ENCODE measurements at regions of chr1 and their contacts with region 1.

Region 1: DNA sequence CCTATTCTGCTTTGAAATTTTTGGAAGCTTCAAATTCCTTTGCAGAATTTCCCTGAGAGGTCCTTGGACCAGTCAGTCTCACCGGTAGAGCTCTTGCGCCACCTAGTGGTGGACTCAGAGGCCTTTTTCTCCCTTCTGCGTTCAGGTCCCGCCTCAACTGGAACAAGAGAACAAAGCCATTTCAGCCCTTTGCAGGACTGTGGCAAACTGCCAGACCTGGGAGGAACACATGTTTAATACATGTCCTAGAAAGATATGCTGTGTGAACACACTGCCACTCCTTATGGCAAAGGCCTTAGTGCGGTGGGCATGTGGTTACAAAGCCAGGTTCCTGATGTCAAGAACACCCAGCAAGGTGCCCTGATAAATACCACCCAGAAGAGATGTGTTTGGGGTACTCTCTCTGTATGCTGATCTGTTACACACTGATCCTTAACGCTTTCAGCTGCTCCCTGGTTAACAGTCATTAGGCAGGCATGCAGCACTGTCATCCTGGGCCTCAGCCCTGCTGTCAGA is 82.2 kb upstream of the SSX2IP start:
- DNase-seq: peak; percentile 92
- ATAC-seq: peak; percentile 31
- H3K4me3 ChIP-seq: no peak overlapping the region
- H3K27ac ChIP-seq: peak overlapping the region; percentile 99
- H3K4me1 ChIP-seq: peaks cover 49% of the 10 kb centered on the region
- H3K27me3 ChIP-seq: no peaks in the 10 kb centered on the region
- CTCF ChIP-seq: peak; percentile 93

Region 2: DNA sequence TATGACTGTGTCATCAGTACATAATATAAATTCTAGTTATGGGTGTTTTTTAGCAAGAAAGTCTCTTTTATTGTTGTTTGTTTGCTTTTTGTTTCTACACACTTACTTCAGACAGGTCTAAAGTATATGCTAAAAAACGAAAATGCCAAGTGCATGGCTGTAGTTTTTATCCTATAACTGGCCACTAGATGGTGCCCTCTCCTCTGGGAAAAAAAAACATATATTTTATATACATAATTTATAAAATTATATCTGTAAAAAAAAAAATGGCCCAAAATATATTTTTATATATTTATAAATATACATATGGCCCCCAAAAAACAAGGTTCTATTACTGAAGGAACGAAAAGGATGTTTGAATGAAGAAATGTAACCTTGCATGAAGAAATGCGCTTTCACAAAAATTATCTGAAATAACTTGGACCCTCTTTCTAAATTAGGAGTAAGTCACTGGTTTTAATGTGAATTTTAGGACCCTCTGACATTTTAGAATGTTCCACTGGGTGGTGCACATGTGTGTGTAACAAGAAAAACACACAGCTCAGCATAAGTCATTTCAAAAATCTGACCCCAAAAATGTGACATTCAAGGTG is 867.1 kb before region 1 on chr1:
- CTCF ChIA-PET with region 1: no interaction called
- POLR2A ChIA-PET with region 1: no interaction called
- intact Hi-C with region 1: loop called (anchors 10 kb)
- DNase-seq: peak; percentile 51
- ATAC-seq: no peak
- H3K4me3 ChIP-seq: no peak overlapping the region
- H3K27ac ChIP-seq: no peak overlapping the region
- H3K4me1 ChIP-seq: peaks cover 21% of the 10 kb centered on the region
- H3K27me3 ChIP-seq: no peaks in the 10 kb centered on the region
- CTCF ChIP-seq: peak; percentile 45

Region 3: GRCh38 chr1:84726593-84727499 is 45.6 kb before region 1 on chr1:
- CTCF ChIA-PET with region 1: no interaction called
- POLR2A ChIA-PET with region 1: no interaction called
- intact Hi-C with region 1: no loop called
- DNase-seq: peak; percentile 50
- ATAC-seq: peak; percentile 74
- H3K4me3 ChIP-seq: no peak overlapping the region
- H3K27ac ChIP-seq: no peak overlapping the region
- H3K4me1 ChIP-seq: peaks cover 15% of the 10 kb centered on the region
- H3K27me3 ChIP-seq: no peaks in the 10 kb centered on the region
- CTCF ChIP-seq: no peak

Region 4: DNA sequence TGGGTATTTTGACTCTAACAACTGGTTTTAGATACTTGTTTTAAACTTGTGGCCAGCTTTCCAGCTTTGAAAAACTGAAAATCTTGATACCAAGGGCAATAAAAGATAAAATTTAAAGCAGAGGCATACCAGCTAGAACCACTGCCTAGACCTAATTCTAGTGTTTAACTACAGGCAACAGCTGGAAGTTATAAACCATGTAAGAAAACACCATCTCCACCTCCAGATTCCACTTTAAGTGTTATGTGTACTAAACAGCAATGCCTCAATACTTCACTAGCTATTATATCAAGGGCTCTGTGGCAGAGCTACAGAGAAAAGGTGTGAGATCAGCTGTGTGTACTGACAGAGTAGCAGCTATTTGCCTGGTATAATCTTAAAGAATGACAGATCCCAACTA is 51.0 kb after region 1 on chr1:
- CTCF ChIA-PET with region 1: no interaction called
- POLR2A ChIA-PET with region 1: no interaction called
- intact Hi-C with region 1: no loop called
- DNase-seq: no peak
- ATAC-seq: no peak
- H3K4me3 ChIP-seq: no peak overlapping the region
- H3K27ac ChIP-seq: no peak overlapping the region
- H3K4me1 ChIP-seq: no peaks in the 10 kb centered on the region
- H3K27me3 ChIP-seq: no peaks in the 10 kb centered on the region
- CTCF ChIP-seq: no peak

Region 5: DNA sequence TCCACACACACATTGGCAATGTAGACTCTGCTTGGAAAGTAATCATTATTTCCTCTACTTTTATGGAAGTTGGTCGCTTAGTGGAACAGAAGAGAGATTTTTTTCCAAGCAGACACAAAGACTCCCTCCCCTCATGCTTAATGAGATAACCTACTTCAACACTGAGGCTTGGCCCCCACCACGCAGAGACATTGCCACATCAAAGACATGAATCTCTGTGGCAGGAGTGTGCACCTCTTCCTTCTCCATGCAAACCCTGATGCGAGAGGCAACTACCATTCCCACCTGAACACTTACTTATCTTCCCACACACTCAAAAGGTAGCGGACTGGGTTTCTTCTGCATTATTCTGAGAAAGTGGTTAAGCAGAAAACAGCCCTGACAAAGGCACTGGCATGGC is 157.8 kb after region 1 on chr1:
- CTCF ChIA-PET with region 1: no interaction called
- POLR2A ChIA-PET with region 1: no interaction called
- intact Hi-C with region 1: no loop called
- DNase-seq: no peak
- ATAC-seq: no peak
- H3K4me3 ChIP-seq: no peak overlapping the region
- H3K27ac ChIP-seq: peak overlapping the region; percentile 52; the same call in 1 of the 2 replicates
- H3K4me1 ChIP-seq: peaks cover 23% of the 10 kb centered on the region
- H3K27me3 ChIP-seq: no peaks in the 10 kb centered on the region
- CTCF ChIP-seq: no peak